ENCODE measurements at regions of chr17 and their contacts with region 1.

Region 1: GRCh38 chr17:35774499-35774898 is 13.8 kb downstream of the C17orf50 start:
- DNase-seq: peak; percentile 60
- H3K4me3 ChIP-seq: no peak overlapping the region
- H3K27ac ChIP-seq: no peak overlapping the region
- H3K4me1 ChIP-seq: peaks cover 5% of the 10 kb centered on the region
- H3K27me3 ChIP-seq: peaks cover 5 to 7% of the 10 kb centered on the region in 2 experiments
- CTCF ChIP-seq: no peak
- POLR2A ChIP-seq: no peak

Region 2: GRCh38 chr17:35740997-35741931 is 33.2 kb before region 1 on chr17:
- CTCF ChIA-PET with region 1: no interaction called
- POLR2A ChIA-PET with region 1: no interaction called
- dilution Hi-C with region 1: no loop called
- intact Hi-C with region 1: no loop called
- DNase-seq: no peak
- H3K4me3 ChIP-seq: no peak overlapping the region
- H3K27ac ChIP-seq: no peak overlapping the region
- H3K4me1 ChIP-seq: no peaks in the 10 kb centered on the region
- H3K27me3 ChIP-seq: peaks cover 32 to 37% of the 10 kb centered on the region in 2 experiments
- CTCF ChIP-seq: no peak
- POLR2A ChIP-seq: no peak

Region 3: DNA sequence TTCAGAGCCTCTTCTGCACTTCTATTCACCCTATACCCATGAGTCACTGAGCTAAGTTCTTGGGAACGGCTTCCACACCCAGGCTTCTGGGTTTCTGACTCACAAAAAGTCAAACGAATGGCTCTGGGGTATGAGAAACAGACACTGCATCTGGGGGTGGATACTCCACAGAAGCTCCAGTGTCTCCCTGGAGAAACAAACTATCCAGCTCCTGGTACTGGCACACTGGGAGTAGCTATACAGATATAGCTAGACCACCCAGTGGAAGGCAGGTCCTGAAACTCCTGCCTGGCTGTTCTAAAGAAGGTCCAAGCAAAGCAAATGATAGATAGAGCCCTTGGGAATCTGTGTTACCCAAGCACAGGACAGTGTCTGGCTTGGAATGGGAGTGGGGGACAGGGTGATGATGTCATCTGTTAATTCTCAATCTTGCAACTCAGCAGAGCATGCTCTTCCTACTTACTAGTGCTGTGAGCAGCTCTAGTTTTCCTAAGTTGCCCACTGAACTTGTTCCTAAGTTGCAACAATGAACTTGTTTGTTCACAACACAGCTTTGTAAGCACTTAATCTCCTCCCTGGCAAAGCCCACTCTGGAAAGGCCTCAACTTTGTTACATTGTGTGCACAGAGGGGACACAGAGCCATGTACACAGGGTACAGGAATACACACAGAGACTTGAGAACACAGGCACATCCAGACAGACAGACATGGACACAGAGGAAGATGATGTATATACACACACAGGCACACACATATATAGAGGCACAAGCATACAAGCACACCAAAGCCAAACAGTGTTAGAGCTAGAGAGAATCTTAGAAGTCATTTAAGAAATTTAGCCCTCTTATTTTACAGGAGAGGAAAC is 14.2 kb after region 1 on chr17:
- CTCF ChIA-PET with region 1: interaction called, 12 read pairs
- POLR2A ChIA-PET with region 1: no interaction called
- dilution Hi-C with region 1: no loop called
- intact Hi-C with region 1: no loop called
- DNase-seq: no peak
- H3K4me3 ChIP-seq: no peak overlapping the region
- H3K27ac ChIP-seq: no peak overlapping the region
- H3K4me1 ChIP-seq: no peaks in the 10 kb centered on the region
- H3K27me3 ChIP-seq: peaks cover 33 to 40% of the 10 kb centered on the region in 2 experiments
- CTCF ChIP-seq: no peak
- POLR2A ChIP-seq: no peak

Measured in endothelial cell of umbilical vein (primary cell).